Astrocyte of the cerebellum (primary cell): ENCODE measurements at regions of chrX and their contacts with region 1.

Region 1: DNA sequence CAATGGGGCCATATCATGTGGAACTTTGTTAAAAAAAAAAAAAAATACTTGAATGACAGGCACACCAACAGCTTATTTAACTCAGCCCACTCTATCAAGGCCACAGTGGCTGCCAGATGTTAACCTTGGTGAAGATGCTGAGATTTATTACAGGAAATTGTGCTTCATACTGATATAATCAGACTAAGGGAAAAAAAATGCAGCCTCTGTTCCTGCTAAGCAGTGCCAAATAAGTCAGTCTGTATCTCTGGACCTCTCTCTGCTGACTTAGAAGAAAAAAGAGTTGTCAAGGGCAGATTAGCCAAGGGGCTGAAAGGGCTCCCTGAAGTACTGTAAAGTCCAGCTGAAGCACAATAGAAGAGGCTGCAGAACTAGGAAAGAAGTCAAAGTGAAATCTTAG is 677.7 kb upstream of the HTR2C start:
- DNase-seq: no peak
- H3K4me3 ChIP-seq: no peak overlapping the region
- CTCF ChIP-seq: no peak

Region 2: GRCh38 chrX:113873049-113873448 is 33.1 kb before region 1 on chrX:
- in situ Hi-C with region 1: loop called (anchors 5 kb)
- DNase-seq: no peak
- H3K4me3 ChIP-seq: no peak overlapping the region
- CTCF ChIP-seq: no peak